SK-N-SH (cell line): ENCODE measurements at regions of chr19 and their contacts with region 1.

Region 1: GRCh38 chr19:54463531-54464043 is at the start of gene LENG9:
- DNase-seq: peak; percentile 88
- H3K4me3 ChIP-seq: peak within 1 kb of the TSS; percentile 63 to 77
- H3K27ac ChIP-seq: peak within 1 kb of the TSS; percentile 65 to 67
- H3K4me1 ChIP-seq: peaks cover 0 to 17% of the 10 kb centered on the region in 2 experiments; a peak in 1 of 4 replicates
- H3K27me3 ChIP-seq: no peaks in the 10 kb centered on the region
- CTCF ChIP-seq: no peak
- EP300 ChIP-seq: no peak
- RAD21 ChIP-seq: no peak
- polyA plus RNA-seq, gene LENG9: 0.20 and 0.21 TPM in 2 replicates

Region 2: DNA sequence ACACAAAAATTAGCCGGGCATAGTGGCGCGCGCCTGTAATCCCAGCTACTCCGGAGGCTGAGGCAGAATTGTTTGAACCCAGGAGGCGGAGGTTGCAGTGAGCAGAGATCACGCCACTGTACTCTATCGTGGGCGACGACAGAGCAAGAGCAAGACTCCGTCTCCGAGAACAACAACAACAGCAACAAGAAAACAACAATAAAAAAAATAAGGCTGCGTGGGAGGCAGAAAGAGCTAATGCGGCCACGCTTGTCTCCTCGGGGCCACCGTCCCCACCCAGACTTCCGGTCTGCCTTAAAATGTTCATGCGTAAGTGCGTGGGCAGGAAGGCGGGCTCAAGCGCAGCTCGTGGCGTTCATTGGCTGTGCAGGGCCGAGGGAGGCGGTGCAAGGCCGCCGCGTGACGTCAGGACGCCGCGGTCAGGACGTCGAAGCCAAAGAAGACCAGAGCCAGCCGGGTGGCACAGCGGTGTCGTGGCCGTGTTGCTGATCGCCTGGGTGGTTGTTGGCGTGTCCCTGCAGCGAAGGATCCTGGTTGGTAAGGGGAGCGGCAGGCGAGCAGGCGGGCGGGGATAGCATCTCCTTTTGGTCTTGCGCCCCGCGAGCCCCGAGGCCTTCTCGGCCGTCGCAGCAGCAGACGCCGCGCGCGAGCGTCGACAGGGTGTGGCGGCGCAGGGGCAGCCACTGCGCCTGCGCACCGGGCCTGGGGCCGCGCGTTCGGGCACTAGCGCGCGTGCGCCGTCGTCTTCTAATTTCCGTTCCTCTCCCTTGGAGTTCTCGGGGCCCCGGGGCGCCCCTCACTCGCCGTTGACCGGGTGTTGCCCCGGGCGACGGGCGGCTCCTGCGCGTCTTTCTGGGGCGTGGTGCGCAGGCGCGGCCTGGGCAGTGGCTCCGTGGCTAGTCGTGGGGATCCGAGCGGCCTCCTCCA is 14.6 kb before region 1 on chr19 and contains the start of gene LENG8:
- CTCF ChIA-PET with region 1: interaction called, 3 read pairs
- POLR2A ChIA-PET with region 1: interaction called, 24 read pairs
- DNase-seq: peak; percentile 96
- H3K4me3 ChIP-seq: peak within 1 kb of the TSS; percentile 86 to 98
- H3K27ac ChIP-seq: peak within 1 kb of the TSS; percentile 94 to 97
- H3K4me1 ChIP-seq: peaks cover 14 to 17% of the 10 kb centered on the region in 2 experiments; a peak in 2 of 4 replicates
- H3K27me3 ChIP-seq: no peaks in the 10 kb centered on the region
- CTCF ChIP-seq: no peak
- EP300 ChIP-seq: no peak
- RAD21 ChIP-seq: no peak
- polyA plus RNA-seq, gene LENG8: 84.0 and 89.1 TPM in 2 replicates